HCT116 (cell line): ENCODE measurements at regions of chr4 and their contacts with region 1.

Region 1: DNA sequence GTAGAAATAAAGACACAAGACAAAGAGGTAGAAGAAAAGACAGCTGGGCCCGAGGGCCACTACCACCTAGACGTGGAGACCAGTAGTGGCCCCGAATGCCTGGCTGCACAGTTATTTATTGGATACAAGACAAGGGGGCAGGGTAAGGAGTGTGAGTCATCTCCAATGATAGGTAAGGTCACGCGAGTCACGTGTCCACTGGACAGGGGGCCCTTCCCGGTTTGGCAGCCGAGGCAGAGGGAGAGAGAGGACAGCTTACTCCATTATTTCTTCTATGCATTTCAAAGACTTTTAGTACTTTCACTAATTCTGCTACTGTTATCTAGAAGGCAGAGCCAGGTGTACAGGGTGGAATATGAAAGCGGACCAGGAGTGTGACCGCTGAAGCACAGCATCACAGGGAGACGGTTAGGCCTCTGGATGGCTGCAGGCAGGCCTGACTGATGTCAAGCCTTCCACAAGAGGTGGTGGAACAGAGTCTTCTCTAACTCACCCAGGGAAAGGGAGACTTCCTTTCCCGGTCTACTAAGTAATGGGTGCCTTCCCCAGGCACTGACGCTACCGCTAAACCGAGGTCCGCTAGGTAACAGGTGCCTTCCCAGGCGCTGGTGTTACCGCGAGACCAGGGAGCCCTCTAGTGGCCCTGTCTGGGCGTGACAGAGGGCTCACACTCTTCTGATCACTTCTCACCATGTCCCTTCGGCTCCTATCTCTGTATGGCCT is 44.9 kb downstream of the ZBTB49 start:
- DNase-seq: peak; percentile 43
- ATAC-seq: peak; percentile 99
- H3K4me3 ChIP-seq: peak overlapping the region; percentile 27 to 39; a peak in 3 of 4 replicates
- H3K27ac ChIP-seq: no peak overlapping the region
- H3K4me1 ChIP-seq: peaks cover 0 to 8% of the 10 kb centered on the region in 2 experiments; a peak in 1 of 4 replicates
- H3K27me3 ChIP-seq: no peaks in the 10 kb centered on the region
- CTCF ChIP-seq: peak; percentile 74 to 86 (median 77)
- POLR2A ChIP-seq: no peak
- RAD21 ChIP-seq: peak; percentile 84

Region 2: GRCh38 chr4:4248029-4248884 is 86.7 kb before region 1 on chr4 and contains the start of gene TMEM128:
- CTCF ChIA-PET with region 1: interaction called, 5 read pairs
- POLR2A ChIA-PET with region 1: no interaction called
- RAD21 ChIA-PET with region 1: no interaction called
- intact Hi-C with region 1: loop called (anchors 2 kb)
- DNase-seq: peak; percentile 92
- ATAC-seq: peak; percentile 90
- H3K4me3 ChIP-seq: peak within 1 kb of the TSS; percentile 85 to 94
- H3K27ac ChIP-seq: peak within 1 kb of the TSS; percentile 85
- H3K4me1 ChIP-seq: peaks cover 8 to 20% of the 10 kb centered on the region in 2 experiments
- H3K27me3 ChIP-seq: no peaks in the 10 kb centered on the region
- CTCF ChIP-seq: peak in 2 of 3 experiments; percentile 33 to 37; a peak in 2 of 6 replicates
- POLR2A ChIP-seq: peak; percentile 83
- RAD21 ChIP-seq: no peak
- total RNA-seq, gene TMEM128: 19.5 TPM

Region 3: DNA sequence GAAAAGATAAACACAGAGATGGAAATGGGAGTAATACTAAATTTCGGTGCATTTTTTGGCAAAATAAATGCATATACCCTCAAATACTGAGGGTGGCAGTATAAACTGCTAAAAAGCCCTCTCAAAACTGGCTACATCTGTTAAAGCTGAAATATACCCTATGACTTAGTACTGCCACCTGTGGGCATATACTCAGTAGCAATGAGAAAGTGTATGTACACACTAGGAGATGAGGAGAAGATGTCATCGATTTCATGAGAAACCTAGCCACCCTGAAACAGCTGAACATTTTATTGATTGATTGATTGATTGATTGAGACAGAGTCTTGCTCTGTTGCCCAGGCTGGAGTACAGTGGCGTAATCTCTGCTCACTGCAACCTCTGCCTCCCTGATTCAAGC is 74.7 kb before region 1 on chr4:
- CTCF ChIA-PET with region 1: interaction called, 12 read pairs
- POLR2A ChIA-PET with region 1: no interaction called
- RAD21 ChIA-PET with region 1: no interaction called
- intact Hi-C with region 1: loop called (anchors 1 kb)
- DNase-seq: peak; percentile 74
- ATAC-seq: peak; percentile 98
- H3K4me3 ChIP-seq: no peak overlapping the region
- H3K27ac ChIP-seq: no peak overlapping the region
- H3K4me1 ChIP-seq: no peaks in the 10 kb centered on the region
- H3K27me3 ChIP-seq: no peaks in the 10 kb centered on the region
- CTCF ChIP-seq: peak; percentile 52 to 96 (median 74)
- POLR2A ChIP-seq: no peak
- RAD21 ChIP-seq: peak; percentile 80